Panc1 (cell line): ENCODE measurements at regions of chr9 and their contacts with region 1.

Region 1: DNA sequence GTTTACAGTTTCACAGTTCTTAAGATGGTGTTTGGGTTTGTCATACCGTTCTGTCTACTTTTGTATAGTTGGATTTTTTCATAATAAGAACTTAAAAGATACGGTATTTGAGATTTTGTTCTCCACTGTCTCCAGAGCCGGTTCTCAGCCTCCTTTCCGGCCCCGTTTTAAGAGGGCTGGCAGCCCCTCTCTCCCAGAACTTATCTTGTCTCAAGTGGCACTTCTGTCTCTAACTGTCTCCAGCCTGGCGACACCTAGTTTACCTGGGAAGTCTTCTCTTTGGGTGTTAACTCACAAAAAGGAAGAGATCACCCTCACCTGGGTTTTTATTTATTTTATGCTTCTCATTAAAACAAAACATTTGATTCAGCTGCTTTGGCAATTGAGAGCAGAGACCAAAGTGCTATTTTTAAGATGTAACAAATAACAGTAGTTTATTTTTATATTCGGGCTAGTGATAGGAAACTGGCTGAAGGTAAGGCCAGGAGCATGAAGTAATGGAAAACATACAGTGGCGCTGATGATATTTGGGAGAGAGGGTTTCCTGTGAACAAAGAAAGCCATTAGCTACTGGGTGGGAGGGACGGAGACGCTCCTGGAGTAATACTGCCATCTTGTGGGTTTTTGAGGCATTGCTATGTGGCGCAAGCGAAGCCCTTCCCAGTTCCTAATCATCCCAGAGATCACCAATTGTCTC is 48.3 kb downstream of the ACER2 start:
- DNase-seq: peak; percentile 67
- ATAC-seq: peak; percentile 89
- H3K4me3 ChIP-seq: peak overlapping the region in 1 of 2 experiments; percentile 35; a peak in 2 of 4 replicates
- H3K27ac ChIP-seq: no peak overlapping the region
- H3K4me1 ChIP-seq: no peaks in the 10 kb centered on the region
- H3K27me3 ChIP-seq: no peaks in the 10 kb centered on the region
- CTCF ChIP-seq: peak; percentile 76

Region 2: GRCh38 chr9:19371942-19372341 is 85.2 kb before region 1 on chr9:
- CTCF ChIA-PET with region 1: no interaction called
- POLR2A ChIA-PET with region 1: no interaction called
- in situ Hi-C with region 1: no loop called
- intact Hi-C with region 1: loop called (anchors 5 kb)
- DNase-seq: no peak
- ATAC-seq: no peak
- H3K4me3 ChIP-seq: no peak overlapping the region
- H3K27ac ChIP-seq: no peak overlapping the region
- H3K4me1 ChIP-seq: no peaks in the 10 kb centered on the region
- H3K27me3 ChIP-seq: no peaks in the 10 kb centered on the region
- CTCF ChIP-seq: no peak; the same call in 1 of the 2 replicates

Region 3: DNA sequence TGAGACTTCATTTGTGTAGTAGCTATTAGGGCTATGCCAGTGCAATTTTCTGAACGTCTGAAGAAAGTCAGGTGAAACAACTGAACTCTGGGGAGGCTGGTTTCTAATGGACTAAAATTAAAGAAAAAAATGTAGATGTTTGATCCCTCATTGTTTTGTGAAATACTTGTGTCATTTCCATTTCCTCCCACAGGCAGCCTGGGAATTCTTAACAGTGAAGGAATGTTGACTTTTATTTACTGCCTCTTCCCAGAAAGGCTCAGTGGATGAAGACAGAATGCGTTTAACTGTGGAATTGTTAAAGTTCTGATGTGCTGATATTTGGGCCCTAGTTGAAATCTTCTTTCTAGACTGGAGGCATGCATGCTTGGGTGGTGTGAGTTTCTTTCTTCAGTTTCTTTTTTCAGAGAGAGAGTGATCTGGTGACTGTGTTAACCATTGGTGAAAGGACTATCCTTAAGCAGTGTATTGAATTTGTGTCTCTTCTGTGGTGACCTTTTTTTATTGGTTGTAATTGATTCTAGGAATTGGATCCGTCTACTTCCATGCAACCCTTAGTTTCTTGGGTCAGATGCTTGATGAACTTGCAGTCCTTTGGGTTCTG is 32.9 kb before region 1 on chr9:
- CTCF ChIA-PET with region 1: no interaction called
- POLR2A ChIA-PET with region 1: no interaction called
- in situ Hi-C with region 1: no loop called
- intact Hi-C with region 1: no loop called
- DNase-seq: no peak
- ATAC-seq: no peak
- H3K4me3 ChIP-seq: no peak overlapping the region
- H3K27ac ChIP-seq: no peak overlapping the region
- H3K4me1 ChIP-seq: no peaks in the 10 kb centered on the region
- H3K27me3 ChIP-seq: no peaks in the 10 kb centered on the region
- CTCF ChIP-seq: no peak